Sciatic nerve (tissue), 2 donors: ENCODE measurements at regions of chr18 and their contacts with region 1.

Region 1: GRCh38 chr18:63444567-63444966 is 22.3 kb upstream of the VPS4B start:
- DNase-seq: no peak
- ATAC-seq: peak; percentile 58

Region 2: GRCh38 chr18:63016270-63016669 is 428.3 kb before region 1 on chr18:
- intact Hi-C with region 1: loop called (anchors 10 kb)
- DNase-seq: no peak
- ATAC-seq: peak; percentile 78